ENCODE measurements at regions of chr19 and their contacts with region 1.

Region 1: GRCh38 chr19:6279931-6280591 is at the start of gene MLLT1:
- DNase-seq: peak; percentile 81 to 98
- H3K4me3 ChIP-seq: peak within 1 kb of the TSS; percentile 95 to 98
- H3K27ac ChIP-seq: peak within 1 kb of the TSS; percentile 75 to 83
- H3K4me1 ChIP-seq: peaks cover 24 to 39% of the 10 kb centered on the region in 2 donors
- H3K27me3 ChIP-seq: no peaks in the 10 kb centered on the region
- CTCF ChIP-seq: peak; percentile 38 to 72 (median 55)
- total RNA-seq, gene MLLT1: 34.5 TPM

Region 2: GRCh38 chr19:6056801-6057650 is 223.0 kb before region 1 on chr19:
- intact Hi-C with region 1: loop called (anchors 5 kb)
- DNase-seq: peak; percentile 67 to 94
- H3K4me3 ChIP-seq: peak overlapping the region; percentile 28 to 47
- H3K27ac ChIP-seq: peak overlapping the region; percentile 93 to 96
- H3K4me1 ChIP-seq: peaks cover 15 to 55% of the 10 kb centered on the region in 2 donors
- H3K27me3 ChIP-seq: no peaks in the 10 kb centered on the region
- CTCF ChIP-seq: no peak

Region 3: GRCh38 chr19:6199240-6199983 is 80.6 kb before region 1 on chr19:
- intact Hi-C with region 1: loop called (anchors 1 kb)
- DNase-seq: peak; percentile 95 to 99
- H3K4me3 ChIP-seq: peak overlapping the region; percentile 70 to 78
- H3K27ac ChIP-seq: no peak overlapping the region
- H3K4me1 ChIP-seq: peaks cover 0 to 9% of the 10 kb centered on the region in 2 donors
- H3K27me3 ChIP-seq: no peaks in the 10 kb centered on the region
- CTCF ChIP-seq: peak in 2 of 3 experiments; percentile 38 to 68

Region 4: DNA sequence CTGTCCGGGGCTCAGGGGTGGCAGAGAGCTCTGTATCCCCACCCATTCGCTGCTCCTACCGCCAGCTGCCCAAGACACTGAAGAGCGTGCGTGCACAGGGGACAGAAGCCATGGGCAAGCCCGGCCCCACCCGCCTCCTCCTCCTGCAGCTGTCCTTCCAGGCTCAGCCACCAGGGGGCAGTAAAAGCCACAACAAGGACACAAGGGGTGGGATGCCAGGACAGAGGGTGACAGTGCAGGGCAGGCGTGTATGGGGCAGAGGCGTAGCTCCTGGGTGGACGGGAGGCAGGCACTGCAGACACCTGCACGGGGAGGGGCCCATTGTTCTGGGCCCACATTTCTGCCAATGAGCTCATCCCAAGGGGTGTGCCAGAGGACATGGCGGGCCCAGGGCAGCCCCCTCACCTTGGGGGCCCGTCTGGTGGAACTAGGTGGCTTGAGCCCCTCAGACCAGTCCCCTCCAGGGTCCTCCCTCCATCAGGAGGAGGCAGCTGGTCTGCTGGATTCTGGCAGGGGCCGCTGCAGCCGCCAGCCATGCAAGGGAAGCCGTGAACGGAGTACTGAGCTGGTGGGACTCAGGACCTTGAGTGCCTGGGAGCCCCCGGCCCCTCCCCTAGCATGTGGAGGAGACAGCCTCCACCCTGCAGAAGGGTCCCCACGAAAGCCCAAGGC is 61.4 kb before region 1 on chr19:
- intact Hi-C with region 1: loop called (anchors 1 kb)
- DNase-seq: peak; percentile 59 to 94
- H3K4me3 ChIP-seq: no peak overlapping the region
- H3K27ac ChIP-seq: no peak overlapping the region
- H3K4me1 ChIP-seq: peaks cover 4 to 9% of the 10 kb centered on the region in 2 donors
- H3K27me3 ChIP-seq: no peaks in the 10 kb centered on the region
- CTCF ChIP-seq: peak; percentile 95 to 98 (median 97)

Region 5: DNA sequence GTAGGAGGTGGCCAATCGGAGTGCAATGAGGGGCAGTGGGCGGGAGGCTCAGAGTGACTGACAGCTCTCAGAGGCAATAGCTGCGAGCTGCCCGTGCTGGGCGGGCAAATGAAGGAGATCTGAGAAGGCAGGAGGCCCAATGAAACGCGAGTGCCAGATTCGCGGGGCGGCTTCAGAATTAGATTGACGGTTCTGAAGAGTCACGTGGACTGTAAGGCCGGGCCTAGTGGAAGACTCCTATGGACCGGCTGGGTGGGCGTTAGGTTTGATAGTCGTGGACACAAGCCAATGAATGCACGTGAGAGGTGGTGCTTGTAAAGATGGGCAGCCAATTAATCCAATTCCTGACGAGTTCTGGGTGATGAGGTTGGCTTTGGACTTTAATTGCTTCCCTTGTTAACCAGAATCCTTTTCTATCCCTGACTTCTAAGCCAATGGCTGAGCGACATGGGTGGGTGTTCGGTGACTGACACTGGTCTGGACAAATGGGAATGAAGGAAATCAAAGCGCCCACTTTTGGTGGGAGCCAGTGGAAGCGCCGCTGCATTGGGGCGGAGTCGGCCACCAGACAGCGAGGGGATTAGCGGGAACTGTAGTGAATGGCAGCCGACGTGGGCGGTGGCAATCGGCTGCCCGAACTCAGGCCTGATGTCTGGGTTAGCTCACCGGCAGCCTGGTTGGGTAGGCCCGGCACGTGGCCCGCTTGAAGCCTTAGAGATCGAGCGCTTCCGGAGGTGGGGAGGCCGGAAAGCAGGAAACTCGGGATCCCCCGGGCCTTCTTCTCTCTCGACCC is 145.1 kb after region 1 on chr19:
- intact Hi-C with region 1: loop called (anchors 2 kb)
- DNase-seq: peak; percentile 100
- H3K4me3 ChIP-seq: peak overlapping the region; percentile 21 to 48
- H3K27ac ChIP-seq: peak overlapping the region; percentile 83 to 87
- H3K4me1 ChIP-seq: peaks cover 13 to 21% of the 10 kb centered on the region in 2 donors
- H3K27me3 ChIP-seq: no peaks in the 10 kb centered on the region
- CTCF ChIP-seq: peak in 1 of 3 experiments; percentile 17

Measured in ascending aorta (tissue), 2 donors.